ENCODE measurements at regions of chr17 and their contacts with region 1.

Region 1: DNA sequence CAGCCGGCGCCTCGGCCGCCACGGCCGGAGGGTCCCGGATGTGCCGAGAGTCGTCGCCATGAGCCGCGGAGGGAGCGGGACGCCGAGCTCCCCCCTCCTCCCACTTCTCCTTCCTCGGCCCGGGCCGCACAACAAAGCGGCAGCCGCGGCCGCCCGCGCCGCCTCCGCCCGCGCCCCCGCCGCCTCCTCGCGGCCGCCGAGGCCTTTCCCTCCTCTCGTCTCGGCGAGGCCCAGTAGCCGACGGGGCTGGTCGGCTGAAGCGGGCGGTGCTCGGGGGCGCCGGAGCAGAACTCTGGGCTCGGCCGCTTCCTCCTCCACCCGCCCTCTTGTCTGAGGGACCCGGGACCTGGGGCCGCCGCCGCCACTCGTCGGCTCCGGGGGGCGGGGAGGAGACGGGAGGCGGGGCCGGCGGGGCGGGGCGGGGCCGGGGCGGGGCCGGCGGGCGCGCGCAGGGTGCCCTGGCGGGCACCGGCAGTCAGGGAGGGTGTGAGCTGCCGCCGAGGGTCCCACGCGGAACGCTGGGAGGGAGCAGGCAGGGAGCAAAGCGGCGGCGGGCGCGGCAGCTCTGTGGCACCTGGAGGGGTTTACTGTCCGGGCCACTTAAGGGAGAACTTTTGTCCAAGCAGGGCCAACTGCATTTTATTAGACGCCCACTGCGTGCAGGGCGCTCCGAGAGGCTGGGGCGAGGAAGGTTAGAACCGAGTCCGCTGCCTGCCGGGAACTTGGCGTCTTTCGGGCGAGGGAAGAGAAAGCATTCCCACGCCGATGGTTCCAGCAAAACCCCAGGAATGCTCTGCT is at the start of gene SMURF2:
- DNase-seq: peak; percentile 61
- ATAC-seq: peak; percentile 82
- H3K4me3 ChIP-seq: peak within 1 kb of the TSS; percentile 85
- H3K27ac ChIP-seq: peak within 1 kb of the TSS; percentile 99
- H3K4me1 ChIP-seq: peaks cover 11% of the 10 kb centered on the region
- H3K27me3 ChIP-seq: no peaks in the 10 kb centered on the region
- CTCF ChIP-seq: no peak
- POLR2A ChIP-seq: peak; percentile 96
- RAD21 ChIP-seq: no peak
- total RNA-seq, gene SMURF2: 736 and 774 TPM in 2 replicates

Region 2: DNA sequence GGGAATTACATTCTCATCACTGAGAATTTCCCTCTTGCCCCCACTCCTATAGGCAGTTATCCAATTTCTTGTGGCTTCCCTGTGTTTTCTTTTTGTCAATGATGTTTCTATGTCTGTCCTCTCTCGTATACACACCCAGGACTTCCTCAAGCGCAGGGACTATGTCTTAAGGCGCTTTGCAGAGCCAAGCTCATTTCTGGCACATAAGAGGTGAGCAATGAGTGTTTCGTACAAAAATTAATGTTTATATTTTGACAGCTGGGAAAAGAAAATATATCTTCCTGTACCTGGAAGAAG is 887.3 kb before region 1 on chr17:
- CTCF ChIA-PET with region 1: no interaction called
- POLR2A ChIA-PET with region 1: no interaction called
- dilution Hi-C with region 1: no loop called
- in situ Hi-C with region 1: no loop called
- intact Hi-C with region 1: no loop called
- DNase-seq: peak; percentile 21
- ATAC-seq: no peak
- H3K4me3 ChIP-seq: peak overlapping the region; percentile 100
- H3K27ac ChIP-seq: peak overlapping the region; percentile 87; the same call in 1 of the 2 replicates
- H3K4me1 ChIP-seq: 0 out of 2 replicates have a peak, but pooled peaks cover 2% of the 10 kb centered on the region
- H3K27me3 ChIP-seq: no peaks in the 10 kb centered on the region
- CTCF ChIP-seq: no peak
- POLR2A ChIP-seq: no peak
- RAD21 ChIP-seq: no peak

Region 3: GRCh38 chr17:64707019-64707591 is 44.9 kb after region 1 on chr17:
- CTCF ChIA-PET with region 1: no interaction called
- POLR2A ChIA-PET with region 1: interaction called, 4 read pairs
- dilution Hi-C with region 1: no loop called
- in situ Hi-C with region 1: no loop called
- intact Hi-C with region 1: loop called (anchors 5 kb)
- DNase-seq: peak; percentile 100
- ATAC-seq: peak; percentile 81
- H3K4me3 ChIP-seq: no peak overlapping the region
- H3K27ac ChIP-seq: peak overlapping the region; percentile 76
- H3K4me1 ChIP-seq: peaks cover 24% of the 10 kb centered on the region
- H3K27me3 ChIP-seq: no peaks in the 10 kb centered on the region
- CTCF ChIP-seq: no peak
- POLR2A ChIP-seq: 0 out of 2 replicates have a peak, but pooled peaks have one; percentile 15
- RAD21 ChIP-seq: peak; percentile 20; the same call in 1 of the 2 replicates

Measured in IMR-90 (cell line).